ENCODE measurements at regions of chr1 and their contacts with region 1.

Region 1: GRCh38 chr1:206479183-206480125 is 9.2 kb downstream of the IKBKE start:
- DNase-seq: peak; percentile 95
- ATAC-seq: peak; percentile 79
- H3K4me3 ChIP-seq: no peak overlapping the region
- H3K27ac ChIP-seq: no peak overlapping the region
- H3K4me1 ChIP-seq: peaks cover 7% of the 10 kb centered on the region
- H3K27me3 ChIP-seq: no peaks in the 10 kb centered on the region
- CTCF ChIP-seq: peak; percentile 99

Region 2: DNA sequence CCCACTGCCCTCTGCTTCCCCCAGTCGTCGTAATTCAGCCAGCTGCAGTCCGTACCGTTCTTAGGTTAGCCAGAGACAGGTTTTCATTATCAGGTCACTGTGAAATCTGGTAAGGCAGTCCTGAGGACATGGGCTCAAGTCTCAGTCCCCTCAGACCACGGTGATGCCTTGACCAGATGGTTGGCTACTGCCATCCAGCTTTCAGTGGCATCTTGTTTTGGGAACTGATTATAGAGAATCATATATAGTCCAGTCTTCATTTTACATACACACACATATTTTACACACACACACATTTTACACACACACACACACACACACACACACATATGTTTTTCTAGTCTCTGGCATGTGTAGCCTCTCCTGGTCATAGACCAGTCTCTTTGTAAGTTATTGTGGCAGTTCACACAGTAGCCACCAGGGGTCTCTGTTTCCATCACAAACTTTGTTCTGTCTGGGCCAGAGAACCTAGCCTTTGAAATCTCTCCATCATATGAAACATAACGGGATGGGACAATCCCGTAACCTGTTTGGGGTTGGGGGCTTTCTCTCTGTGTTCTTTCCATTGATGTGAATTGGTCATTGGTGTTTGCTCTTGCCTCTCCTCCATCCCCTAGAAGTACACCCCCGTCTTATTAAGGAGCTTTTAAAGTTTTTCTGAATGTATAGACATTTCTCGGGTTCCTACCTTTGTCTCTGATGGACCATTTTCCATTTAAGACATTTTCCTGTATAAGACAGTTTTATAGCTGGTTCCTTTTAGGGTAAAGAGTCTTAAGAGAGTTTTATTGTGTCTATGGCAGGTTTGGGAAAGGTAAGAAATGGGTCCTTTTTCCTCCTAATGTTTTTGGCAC is 17.6 kb before region 1 on chr1:
- CTCF ChIA-PET with region 1: interaction called, 4 read pairs
- POLR2A ChIA-PET with region 1: no interaction called
- intact Hi-C with region 1: loop called (anchors 1 kb)
- DNase-seq: peak; percentile 97
- ATAC-seq: peak; percentile 83
- H3K4me3 ChIP-seq: no peak overlapping the region
- H3K27ac ChIP-seq: no peak overlapping the region
- H3K4me1 ChIP-seq: peaks cover 18% of the 10 kb centered on the region
- H3K27me3 ChIP-seq: no peaks in the 10 kb centered on the region
- CTCF ChIP-seq: peak; percentile 99

Region 3: DNA sequence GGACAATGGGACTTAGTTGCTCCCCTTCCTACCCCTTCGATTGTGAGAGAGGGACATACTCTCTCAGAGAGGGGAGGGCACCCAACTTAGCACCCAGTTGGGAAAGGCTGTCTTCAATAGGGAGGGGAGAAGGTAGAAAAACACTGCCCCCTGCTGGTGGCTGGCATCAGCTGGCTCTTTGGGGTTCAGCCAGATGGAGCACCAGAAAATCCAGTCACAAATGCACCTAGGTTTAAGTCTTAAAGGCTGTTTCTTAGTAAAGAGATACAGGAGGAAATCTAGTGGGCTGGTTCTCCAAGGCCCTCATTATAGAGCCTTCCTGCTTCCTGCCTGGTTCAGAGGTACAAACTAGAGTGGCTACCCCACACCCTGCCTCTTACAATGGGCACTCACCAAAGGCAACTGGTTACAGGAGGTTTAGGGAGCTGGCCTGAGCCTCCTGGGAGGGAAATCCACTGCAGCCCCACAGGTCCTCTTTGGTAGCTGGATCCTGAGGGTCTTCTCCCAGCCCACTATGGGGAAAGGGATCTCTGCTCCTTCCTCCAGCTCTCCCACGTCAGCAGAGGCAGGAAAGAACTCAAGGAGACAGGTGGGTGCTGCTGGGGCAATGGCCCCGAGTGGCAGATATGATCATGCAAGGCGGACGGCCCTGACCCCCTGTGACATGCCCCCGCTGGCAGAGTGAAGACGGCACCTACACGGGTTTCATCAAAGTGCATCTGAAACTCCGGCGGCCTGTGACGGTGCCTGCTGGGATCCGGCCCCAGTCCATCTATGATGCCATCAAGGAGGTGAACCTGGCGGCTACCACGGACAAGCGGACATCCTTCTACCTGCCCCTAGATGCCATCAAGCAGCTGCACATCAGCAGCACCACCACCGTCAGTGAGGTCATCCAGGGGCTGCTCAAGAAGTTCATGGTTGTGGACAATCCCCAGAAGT is 104.5 kb after region 1 on chr1:
- CTCF ChIA-PET with region 1: interaction called, 10 read pairs
- POLR2A ChIA-PET with region 1: no interaction called
- intact Hi-C with region 1: no loop called
- DNase-seq: peak; percentile 86
- ATAC-seq: peak; percentile 68
- H3K4me3 ChIP-seq: no peak overlapping the region
- H3K27ac ChIP-seq: no peak overlapping the region
- H3K4me1 ChIP-seq: peaks cover 52% of the 10 kb centered on the region
- H3K27me3 ChIP-seq: no peaks in the 10 kb centered on the region
- CTCF ChIP-seq: peak; percentile 100

Region 4: GRCh38 chr1:206612129-206612876 is 132.8 kb after region 1 on chr1 and contains the start of gene EIF2D:
- CTCF ChIA-PET with region 1: interaction called, 10 read pairs
- POLR2A ChIA-PET with region 1: no interaction called
- intact Hi-C with region 1: no loop called
- DNase-seq: peak; percentile 99
- ATAC-seq: peak; percentile 94
- H3K4me3 ChIP-seq: peak within 1 kb of the TSS; percentile 87
- H3K27ac ChIP-seq: peak within 1 kb of the TSS; percentile 53
- H3K4me1 ChIP-seq: peaks cover 7% of the 10 kb centered on the region
- H3K27me3 ChIP-seq: no peaks in the 10 kb centered on the region
- CTCF ChIP-seq: peak; percentile 98
- total RNA-seq, gene EIF2D: 107 and 110 TPM in 2 replicates

Region 5: GRCh38 chr1:206760590-206760989 is 281.1 kb after region 1 on chr1:
- CTCF ChIA-PET with region 1: interaction called, 13 read pairs
- POLR2A ChIA-PET with region 1: no interaction called
- intact Hi-C with region 1: no loop called
- DNase-seq: no peak
- ATAC-seq: no peak
- H3K4me3 ChIP-seq: no peak overlapping the region
- H3K27ac ChIP-seq: no peak overlapping the region
- H3K4me1 ChIP-seq: peaks cover 10% of the 10 kb centered on the region
- H3K27me3 ChIP-seq: peaks cover 47% of the 10 kb centered on the region
- CTCF ChIP-seq: no peak